Heart left ventricle (tissue), 16 donors: ENCODE measurements at regions of chr10 and their contacts with region 1.

Region 1: GRCh38 chr10:3467052-3467951 is 294.7 kb upstream of the PITRM1 start:
- DNase-seq: peak; percentile 80 to 90 (median 85)
- ATAC-seq: peak; percentile 60 to 85 (median 82)
- H3K4me3 ChIP-seq: peak overlapping the region in 9 of 12 donors; percentile 4 to 40 (median 29)
- H3K27ac ChIP-seq: peak overlapping the region; percentile 74 to 97 (median 92)
- H3K4me1 ChIP-seq: peaks cover 0 to 69% (median 46%) of the 10 kb centered on the region in 12 donors
- H3K27me3 ChIP-seq: no peaks in the 10 kb centered on the region
- CTCF ChIP-seq: peak; percentile 35 to 75 (median 54)
- POLR2A ChIP-seq: no peak

Region 2: GRCh38 chr10:3239066-3239919 is 228.0 kb before region 1 on chr10:
- intact Hi-C with region 1: loop called in 3 of 10 experiments (anchors 1 to 10 kb)
- DNase-seq: peak; percentile 70 to 85 (median 75)
- ATAC-seq: peak; percentile 59 to 88 (median 82)
- H3K4me3 ChIP-seq: peak overlapping the region in 8 of 12 donors; percentile 6 to 36 (median 24)
- H3K27ac ChIP-seq: peak overlapping the region in 8 of 12 donors; percentile 39 to 75 (median 54)
- H3K4me1 ChIP-seq: peaks cover 0 to 10% (median 3%) of the 10 kb centered on the region in 12 donors
- H3K27me3 ChIP-seq: no peaks in the 10 kb centered on the region
- CTCF ChIP-seq: peak; percentile 84 to 98 (median 94)
- POLR2A ChIP-seq: no peak

Region 3: GRCh38 chr10:3426190-3426701 is 41.1 kb before region 1 on chr10:
- intact Hi-C with region 1: loop called in 2 of 10 experiments (anchors 1 to 5 kb)
- DNase-seq: no peak
- ATAC-seq: no peak
- H3K4me3 ChIP-seq: no peak overlapping the region
- H3K27ac ChIP-seq: peak overlapping the region in 7 of 12 donors; percentile 18 to 70 (median 48)
- H3K4me1 ChIP-seq: peaks cover 0 to 57% (median 17%) of the 10 kb centered on the region in 12 donors
- H3K27me3 ChIP-seq: no peaks in the 10 kb centered on the region
- CTCF ChIP-seq: no peak
- POLR2A ChIP-seq: no peak

Region 4: GRCh38 chr10:3749600-3749999 is 282.3 kb after region 1 on chr10:
- intact Hi-C with region 1: loop called in 1 of 10 experiments (anchors 5 kb)
- DNase-seq: peak in 1 of 5 donors; percentile 65
- ATAC-seq: peak; percentile 75 to 85 (median 78)
- H3K4me3 ChIP-seq: peak overlapping the region in 9 of 12 donors; percentile 24 to 45 (median 37)
- H3K27ac ChIP-seq: peak overlapping the region; percentile 29 to 90 (median 68)
- H3K4me1 ChIP-seq: peaks cover 7 to 50% (median 32%) of the 10 kb centered on the region in 12 donors
- H3K27me3 ChIP-seq: no peaks in the 10 kb centered on the region
- CTCF ChIP-seq: no peak
- POLR2A ChIP-seq: no peak

Region 5: DNA sequence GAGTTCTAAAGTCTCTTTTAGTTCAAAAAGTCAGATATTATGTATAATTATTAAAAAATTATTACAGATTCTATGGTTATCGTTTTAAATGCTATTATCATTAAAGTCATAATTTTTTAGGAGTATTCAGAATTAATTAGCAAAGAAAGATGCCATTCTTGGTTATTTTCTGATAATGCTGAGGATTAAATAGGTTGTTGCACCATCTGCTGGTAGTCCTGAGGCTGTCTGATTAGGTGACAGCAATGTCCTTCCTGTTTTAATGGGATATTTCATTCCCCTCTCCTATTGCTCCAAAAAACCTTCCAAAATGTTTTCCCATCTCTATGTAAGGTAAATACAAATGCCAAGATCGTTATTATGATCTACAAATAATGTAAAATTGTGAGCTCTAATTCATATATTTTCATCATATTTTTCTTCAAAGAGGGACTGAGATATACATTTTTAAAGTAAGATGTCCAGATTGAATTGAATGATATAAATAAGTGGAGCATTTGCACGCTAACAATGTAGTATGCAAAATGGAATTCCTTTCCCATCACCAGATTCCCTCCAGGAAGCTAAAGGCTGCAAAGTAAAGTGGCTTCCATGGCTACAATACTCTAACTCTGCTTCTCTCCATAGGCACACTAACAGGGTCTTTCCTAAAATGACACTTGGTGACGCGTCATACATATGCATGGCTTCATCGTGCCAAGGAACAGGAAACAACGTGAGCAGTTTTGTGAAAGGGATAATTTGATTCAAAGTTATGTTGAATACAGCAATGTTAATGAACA is 1299.9 kb after region 1 on chr10:
- intact Hi-C with region 1: loop called in 1 of 10 experiments (anchors 10 kb)
- DNase-seq: peak in 2 of 5 donors; percentile 19 to 28
- ATAC-seq: peak in 3 of 4 donors; percentile 44 to 66 (median 57)
- H3K4me3 ChIP-seq: no peak overlapping the region
- H3K27ac ChIP-seq: peak overlapping the region in 10 of 12 donors; percentile 1 to 53 (median 36)
- H3K4me1 ChIP-seq: peaks cover 0 to 52% (median 33%) of the 10 kb centered on the region in 12 donors
- H3K27me3 ChIP-seq: no peaks in the 10 kb centered on the region
- CTCF ChIP-seq: peak; percentile 58 to 90 (median 81)
- POLR2A ChIP-seq: no peak